ENCODE measurements at regions of chr18 and their contacts with region 1.

Region 1: DNA sequence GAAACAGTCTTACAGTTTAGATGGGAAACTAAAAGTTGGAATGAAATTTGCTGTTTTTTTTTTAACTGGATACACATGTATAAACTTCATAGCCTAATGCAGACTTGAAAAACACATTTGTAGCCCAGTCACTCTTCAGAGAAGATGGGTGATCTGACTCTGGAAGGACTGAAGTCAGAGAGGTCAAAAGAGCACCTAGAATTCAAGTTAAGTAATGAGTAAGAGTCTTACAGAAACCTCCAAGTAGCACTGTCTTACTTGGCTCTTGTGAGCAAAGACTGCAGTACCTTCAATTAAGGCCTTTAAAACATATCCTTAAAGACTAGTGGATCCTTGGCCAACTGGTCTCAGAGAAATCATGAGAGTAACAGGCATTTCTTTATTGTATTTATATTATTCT is 41.9 kb downstream of the TRAPPC8 start:
- H3K4me3 Mint-ChIP-seq: no peak overlapping the region
- H3K27ac Mint-ChIP-seq: no peak overlapping the region
- H3K4me1 Mint-ChIP-seq: no peaks in the 10 kb centered on the region
- H3K27me3 Mint-ChIP-seq: no peaks in the 10 kb centered on the region

Region 2: DNA sequence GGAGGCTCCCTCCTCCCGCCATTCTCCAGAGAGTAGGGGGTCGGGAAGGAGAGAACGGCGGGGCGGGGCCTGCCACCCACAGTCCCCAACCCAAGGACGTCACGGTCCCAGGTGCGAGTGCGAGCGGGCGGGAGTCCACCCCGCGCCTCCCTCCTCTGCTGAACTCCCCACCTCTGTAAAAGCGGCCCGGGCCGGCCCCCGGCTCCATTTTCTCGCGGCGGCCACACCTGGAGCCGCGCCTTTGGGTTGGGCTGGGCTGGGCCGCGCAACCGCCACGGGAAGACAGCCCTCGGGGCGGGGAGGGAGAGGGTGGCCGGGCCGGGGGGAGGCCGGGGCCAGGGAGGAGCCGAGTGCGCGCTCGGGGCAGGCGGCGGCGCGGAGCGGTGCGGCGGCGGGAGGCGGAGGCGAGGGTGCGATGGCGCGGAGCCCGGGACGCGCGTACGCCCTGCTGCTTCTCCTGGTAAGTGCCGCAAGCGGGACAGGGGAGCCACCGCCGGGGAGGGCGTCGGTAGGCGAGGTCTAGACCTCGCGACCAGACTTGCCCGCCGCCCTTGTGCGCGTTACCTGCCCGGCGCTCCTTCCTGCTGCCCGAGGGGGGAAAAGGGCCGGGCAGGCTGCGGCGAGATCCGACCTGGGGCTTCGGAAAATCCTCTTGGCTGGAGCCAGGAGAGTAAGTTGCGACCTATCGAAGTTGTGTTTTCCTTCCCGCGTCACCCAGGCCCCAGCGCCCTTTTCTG is 403.1 kb before region 1 on chr18 and contains the start of gene DSG2:
- intact Hi-C with region 1: no loop called
- H3K4me3 Mint-ChIP-seq: peak within 1 kb of the TSS; percentile 68
- H3K27ac Mint-ChIP-seq: no peak within 1 kb of the TSS
- H3K4me1 Mint-ChIP-seq: peaks cover 11% of the 10 kb centered on the region
- H3K27me3 Mint-ChIP-seq: peaks cover 41% of the 10 kb centered on the region

Region 3: DNA sequence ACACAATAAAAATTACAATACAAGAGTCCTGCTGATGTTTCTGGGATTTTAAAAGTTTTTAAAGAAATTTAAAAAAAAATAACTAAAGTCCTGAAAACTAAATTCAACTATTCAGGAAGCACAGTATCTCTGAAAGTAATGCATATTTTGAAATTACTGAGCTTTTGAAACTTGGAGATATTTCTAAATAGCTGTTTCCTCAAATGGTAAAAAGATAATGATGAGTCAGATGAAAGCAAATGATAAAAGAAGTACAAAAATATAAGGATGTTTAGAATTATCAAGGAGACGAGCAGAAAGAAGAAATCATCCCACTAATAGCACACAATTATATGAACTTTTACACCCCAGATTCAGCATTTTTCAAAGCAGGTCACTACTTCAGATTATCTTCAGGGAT is 50.2 kb before region 1 on chr18:
- intact Hi-C with region 1: loop called (anchors 5 kb)
- H3K4me3 Mint-ChIP-seq: no peak overlapping the region
- H3K27ac Mint-ChIP-seq: no peak overlapping the region
- H3K4me1 Mint-ChIP-seq: peaks cover 6% of the 10 kb centered on the region
- H3K27me3 Mint-ChIP-seq: no peaks in the 10 kb centered on the region

Region 4: GRCh38 chr18:32389858-32390257 is 488.8 kb after region 1 on chr18:
- intact Hi-C with region 1: no loop called
- H3K4me3 Mint-ChIP-seq: no peak overlapping the region
- H3K27ac Mint-ChIP-seq: no peak overlapping the region
- H3K4me1 Mint-ChIP-seq: peaks cover 6% of the 10 kb centered on the region
- H3K27me3 Mint-ChIP-seq: no peaks in the 10 kb centered on the region